Cardiac septum (tissue), 1 donor: ENCODE measurements at regions of chr2 and their contacts with region 1.

Region 1: GRCh38 chr2:238945433-238946150 is 97.7 kb downstream of the TWIST2 start:
- DNase-seq: peak; percentile 72

Region 2: DNA sequence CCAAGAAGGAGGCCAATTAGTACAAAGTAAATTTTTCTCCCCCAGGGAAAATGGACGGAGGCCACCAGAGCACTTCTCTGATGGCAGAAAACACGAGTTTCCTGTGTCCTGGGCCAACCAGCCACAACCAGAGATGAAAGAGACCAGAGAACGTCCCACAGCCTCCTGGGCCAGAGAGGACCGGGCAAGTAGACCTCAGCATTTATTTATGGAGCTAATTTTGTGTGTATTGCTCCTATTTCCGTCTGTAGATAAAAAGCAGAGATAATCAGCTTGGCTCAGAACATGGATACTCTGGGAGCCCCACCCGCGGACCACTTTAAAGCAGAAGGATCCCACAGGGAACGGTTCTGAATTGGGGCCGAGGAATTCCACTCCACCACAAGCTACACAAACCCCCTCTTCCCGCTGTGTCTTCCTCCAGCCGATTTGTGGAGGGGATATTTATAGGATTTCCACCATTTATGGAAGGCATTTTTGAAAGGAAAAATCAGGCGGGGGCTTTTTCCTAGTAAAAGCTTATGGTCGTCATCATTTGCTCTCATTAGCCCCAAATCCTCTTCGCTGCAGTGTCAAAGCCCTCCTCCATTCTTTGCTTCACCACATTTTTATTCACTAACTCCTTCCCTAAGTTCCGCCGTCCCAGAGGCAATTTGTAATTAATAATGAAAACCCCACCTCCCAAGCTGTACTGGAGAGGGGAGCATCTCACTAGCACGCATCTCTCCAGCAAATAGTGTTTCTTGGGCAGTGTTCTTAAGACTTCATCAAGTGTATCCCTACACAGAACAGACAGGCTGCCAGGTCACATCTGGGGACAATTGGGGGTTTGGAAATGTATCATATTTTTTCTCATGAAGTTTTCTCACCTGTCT is 141.4 kb before region 1 on chr2:
- intact Hi-C with region 1: loop called (anchors 5 kb)
- DNase-seq: no peak